Caco-2 (cell line): ENCODE measurements at regions of chrX and their contacts with region 1.

Region 1: DNA sequence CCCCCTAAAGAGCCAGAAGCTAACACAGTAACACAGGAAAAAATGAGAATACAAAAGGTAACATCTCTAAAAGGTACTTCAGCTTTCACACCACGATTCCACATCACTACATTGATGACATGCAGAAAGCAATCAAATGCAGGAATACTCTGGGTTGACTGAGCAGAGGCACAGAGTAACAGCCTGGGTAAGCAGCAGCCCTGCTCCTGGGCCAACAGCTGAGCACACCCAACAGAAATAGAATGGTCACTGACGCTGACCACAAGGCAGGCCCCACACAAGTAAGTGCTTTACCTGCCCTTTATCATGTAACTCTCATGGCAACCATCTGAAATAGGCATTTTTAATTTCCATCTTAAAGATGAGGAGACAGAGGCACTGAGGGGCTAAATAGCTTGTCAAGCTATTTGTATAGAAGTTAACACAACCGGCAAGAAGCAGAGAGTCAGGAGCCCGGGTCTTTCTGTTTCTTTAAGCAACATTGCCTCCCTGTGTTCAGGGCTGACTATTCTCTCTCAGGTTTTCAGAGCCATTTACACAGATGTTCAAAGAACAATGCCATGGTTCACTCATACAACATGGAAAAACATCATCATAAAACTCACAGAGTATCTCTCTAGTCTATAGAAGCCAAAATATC is 168.9 kb downstream of the ZNF674 start:
- DNase-seq: peak; percentile 44 to 50
- H3K4me3 ChIP-seq: no peak overlapping the region
- H3K4me3 Mint-ChIP-seq: no peak overlapping the region
- H3K27ac Mint-ChIP-seq: no peak overlapping the region
- H3K4me1 ChIP-seq: peaks cover 16% of the 10 kb centered on the region
- H3K4me1 Mint-ChIP-seq: peaks cover 19% of the 10 kb centered on the region
- H3K27me3 ChIP-seq: no peaks in the 10 kb centered on the region
- H3K27me3 Mint-ChIP-seq: no peaks in the 10 kb centered on the region
- CTCF ChIP-seq: peak in 1 of 2 experiments; percentile 38

Region 2: DNA sequence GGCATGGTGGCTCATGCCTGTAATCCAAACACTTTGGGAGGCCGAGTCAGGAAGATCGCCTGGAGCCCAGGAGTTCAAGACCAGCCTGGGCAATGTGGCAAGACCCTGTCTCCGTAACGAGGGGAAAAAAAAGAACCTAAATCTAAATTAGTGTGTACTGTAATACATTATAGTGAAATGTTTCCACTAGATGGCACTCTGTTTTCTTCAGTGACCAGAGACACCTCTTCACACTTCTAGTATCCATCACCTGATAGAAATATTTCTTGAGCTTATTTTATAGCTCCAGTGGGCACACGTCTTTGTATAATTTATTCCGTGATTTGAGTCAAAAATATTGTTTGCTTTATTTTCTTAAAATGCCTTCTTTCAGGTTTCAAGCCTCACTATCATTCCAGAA is 574.8 kb before region 1 on chrX:
- CTCF ChIA-PET with region 1: interaction called, 6 read pairs
- POLR2A ChIA-PET with region 1: no interaction called
- intact Hi-C with region 1: loop called (anchors 5 kb)
- DNase-seq: no peak
- H3K4me3 ChIP-seq: no peak overlapping the region
- H3K4me3 Mint-ChIP-seq: no peak overlapping the region
- H3K27ac Mint-ChIP-seq: no peak overlapping the region
- H3K4me1 ChIP-seq: no peaks in the 10 kb centered on the region
- H3K4me1 Mint-ChIP-seq: peaks cover 1% of the 10 kb centered on the region
- H3K27me3 ChIP-seq: no peaks in the 10 kb centered on the region
- H3K27me3 Mint-ChIP-seq: no peaks in the 10 kb centered on the region
- CTCF ChIP-seq: peak in 1 of 2 experiments; percentile 23

Region 3: GRCh38 chrX:46298821-46299220 is 77.5 kb before region 1 on chrX:
- CTCF ChIA-PET with region 1: no interaction called
- POLR2A ChIA-PET with region 1: no interaction called
- intact Hi-C with region 1: no loop called
- DNase-seq: no peak
- H3K4me3 ChIP-seq: no peak overlapping the region
- H3K4me3 Mint-ChIP-seq: no peak overlapping the region
- H3K27ac Mint-ChIP-seq: no peak overlapping the region
- H3K4me1 ChIP-seq: peaks cover 14% of the 10 kb centered on the region
- H3K4me1 Mint-ChIP-seq: peaks cover 8% of the 10 kb centered on the region
- H3K27me3 ChIP-seq: no peaks in the 10 kb centered on the region
- H3K27me3 Mint-ChIP-seq: no peaks in the 10 kb centered on the region
- CTCF ChIP-seq: no peak

Region 4: GRCh38 chrX:46327566-46328081 is 48.7 kb before region 1 on chrX:
- CTCF ChIA-PET with region 1: interaction called, 6 read pairs
- POLR2A ChIA-PET with region 1: no interaction called
- intact Hi-C with region 1: loop called (anchors 1 kb)
- DNase-seq: peak; percentile 79 to 89
- H3K4me3 ChIP-seq: peak overlapping the region; percentile 28
- H3K4me3 Mint-ChIP-seq: peak overlapping the region; percentile 77
- H3K27ac Mint-ChIP-seq: peak overlapping the region; percentile 99
- H3K4me1 ChIP-seq: peaks cover 48% of the 10 kb centered on the region
- H3K4me1 Mint-ChIP-seq: peaks cover 19% of the 10 kb centered on the region
- H3K27me3 ChIP-seq: no peaks in the 10 kb centered on the region
- H3K27me3 Mint-ChIP-seq: no peaks in the 10 kb centered on the region
- CTCF ChIP-seq: no peak

Region 5: DNA sequence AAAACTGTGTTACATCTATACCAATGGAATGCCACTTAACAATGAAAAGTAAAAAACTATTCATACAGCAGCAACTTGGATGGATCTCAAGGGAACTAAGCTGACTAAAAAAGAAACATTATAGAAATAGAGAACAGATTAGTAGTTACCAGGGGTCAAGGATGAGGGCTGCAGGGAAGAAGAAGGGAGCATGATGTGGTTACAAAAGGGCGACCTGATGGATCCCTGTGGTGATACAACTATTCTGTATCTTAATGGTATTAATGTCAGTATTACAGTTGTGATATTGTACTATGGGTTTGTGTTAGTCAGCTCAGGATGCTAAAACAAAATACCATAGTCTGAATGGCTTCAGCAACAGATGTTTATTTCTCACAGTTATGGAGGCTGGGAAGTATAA is 21.9 kb before region 1 on chrX:
- CTCF ChIA-PET with region 1: no interaction called
- POLR2A ChIA-PET with region 1: no interaction called
- intact Hi-C with region 1: no loop called
- DNase-seq: no peak
- H3K4me3 ChIP-seq: no peak overlapping the region
- H3K4me3 Mint-ChIP-seq: no peak overlapping the region
- H3K27ac Mint-ChIP-seq: no peak overlapping the region
- H3K4me1 ChIP-seq: no peaks in the 10 kb centered on the region
- H3K4me1 Mint-ChIP-seq: no peaks in the 10 kb centered on the region
- H3K27me3 ChIP-seq: no peaks in the 10 kb centered on the region
- H3K27me3 Mint-ChIP-seq: no peaks in the 10 kb centered on the region
- CTCF ChIP-seq: no peak